ENCODE measurements at regions of chr12 and their contacts with region 1.

Region 1: GRCh38 chr12:31362759-31363415 is 36.9 kb upstream of the SINHCAF start:
- DNase-seq: peak; percentile 73 to 87
- H3K4me3 ChIP-seq: no peak overlapping the region
- H3K4me3 Mint-ChIP-seq: peak overlapping the region; percentile 50
- H3K27ac Mint-ChIP-seq: peak overlapping the region; percentile 82
- H3K4me1 ChIP-seq: peaks cover 24% of the 10 kb centered on the region
- H3K4me1 Mint-ChIP-seq: peaks cover 33% of the 10 kb centered on the region
- H3K27me3 ChIP-seq: no peaks in the 10 kb centered on the region
- H3K27me3 Mint-ChIP-seq: no peaks in the 10 kb centered on the region
- CTCF ChIP-seq: no peak

Region 2: GRCh38 chr12:31303466-31303865 is 59.4 kb before region 1 on chr12:
- CTCF ChIA-PET with region 1: no interaction called
- POLR2A ChIA-PET with region 1: interaction called, 3 read pairs
- intact Hi-C with region 1: loop called (anchors 1 kb)
- DNase-seq: no peak
- H3K4me3 ChIP-seq: no peak overlapping the region
- H3K4me3 Mint-ChIP-seq: no peak overlapping the region
- H3K27ac Mint-ChIP-seq: peak overlapping the region; percentile 33
- H3K4me1 ChIP-seq: peaks cover 29% of the 10 kb centered on the region
- H3K4me1 Mint-ChIP-seq: peaks cover 69% of the 10 kb centered on the region
- H3K27me3 ChIP-seq: no peaks in the 10 kb centered on the region
- H3K27me3 Mint-ChIP-seq: no peaks in the 10 kb centered on the region
- CTCF ChIP-seq: no peak

Region 3: GRCh38 chr12:31339831-31340622 is 22.9 kb before region 1 on chr12:
- CTCF ChIA-PET with region 1: interaction called, 6 read pairs
- POLR2A ChIA-PET with region 1: interaction called, 6 read pairs
- intact Hi-C with region 1: loop called (anchors 2 kb)
- DNase-seq: peak; percentile 73 to 87
- H3K4me3 ChIP-seq: no peak overlapping the region
- H3K4me3 Mint-ChIP-seq: no peak overlapping the region
- H3K27ac Mint-ChIP-seq: peak overlapping the region; percentile 68
- H3K4me1 ChIP-seq: peaks cover 36% of the 10 kb centered on the region
- H3K4me1 Mint-ChIP-seq: peaks cover 31% of the 10 kb centered on the region
- H3K27me3 ChIP-seq: no peaks in the 10 kb centered on the region
- H3K27me3 Mint-ChIP-seq: no peaks in the 10 kb centered on the region
- CTCF ChIP-seq: no peak

Region 4: DNA sequence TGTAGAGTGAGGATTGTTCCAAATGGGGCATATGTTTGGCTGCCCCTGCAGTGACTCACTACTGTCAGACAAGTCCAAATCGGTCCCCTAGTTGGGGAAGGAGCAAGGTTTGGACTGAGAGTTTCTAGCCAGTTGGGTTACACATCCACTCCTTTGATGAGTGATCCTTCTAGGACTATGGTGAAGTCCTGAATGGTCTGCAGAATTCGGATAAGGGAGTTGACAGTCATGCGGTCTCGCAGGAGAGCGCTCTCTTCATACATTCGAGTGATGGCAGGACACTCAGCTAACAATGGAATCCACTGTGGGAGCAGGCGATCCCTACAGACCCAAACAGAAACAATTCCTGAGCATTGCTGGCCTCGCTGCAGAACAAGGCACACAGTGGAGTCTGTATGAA is 24.6 kb after region 1 on chr12:
- CTCF ChIA-PET with region 1: interaction called, 3 read pairs
- POLR2A ChIA-PET with region 1: interaction called, 10 read pairs
- intact Hi-C with region 1: no loop called
- DNase-seq: peak in 1 of 2 experiments; percentile 23
- H3K4me3 ChIP-seq: no peak overlapping the region
- H3K4me3 Mint-ChIP-seq: no peak overlapping the region
- H3K27ac Mint-ChIP-seq: peak overlapping the region; percentile 82
- H3K4me1 ChIP-seq: peaks cover 59% of the 10 kb centered on the region
- H3K4me1 Mint-ChIP-seq: peaks cover 50% of the 10 kb centered on the region
- H3K27me3 ChIP-seq: no peaks in the 10 kb centered on the region
- H3K27me3 Mint-ChIP-seq: no peaks in the 10 kb centered on the region
- CTCF ChIP-seq: no peak

Measured in Caco-2 (cell line).